ENCODE measurements at regions of chr10 and their contacts with region 1.

Region 1: GRCh38 chr10:13659897-13660550 is 73.3 kb downstream of the PRPF18 start:
- DNase-seq: peak; percentile 49 to 67 (median 60)
- H3K4me3 ChIP-seq: no peak overlapping the region
- H3K4me3 Mint-ChIP-seq: peak overlapping the region in 2 of 8 donors; percentile 44 to 48
- H3K27ac ChIP-seq: no peak overlapping the region
- H3K27ac Mint-ChIP-seq: peak overlapping the region in 4 of 7 donors; percentile 19 to 61 (median 41)
- H3K4me1 ChIP-seq: peaks cover 11% of the 10 kb centered on the region
- H3K4me1 Mint-ChIP-seq: peaks cover 5 to 11% (median 8%) of the 10 kb centered on the region in 4 donors
- H3K27me3 ChIP-seq: no peaks in the 10 kb centered on the region
- H3K27me3 Mint-ChIP-seq: no peaks in the 10 kb centered on the region

Region 2: GRCh38 chr10:13776861-13777311 is 116.9 kb after region 1 on chr10:
- CTCF ChIA-PET with region 1: interaction called, 18 read pairs
- POLR2A ChIA-PET with region 1: no interaction called
- intact Hi-C with region 1: loop called (anchors 1 kb)
- DNase-seq: no peak
- H3K4me3 ChIP-seq: no peak overlapping the region
- H3K4me3 Mint-ChIP-seq: no peak overlapping the region
- H3K27ac ChIP-seq: no peak overlapping the region
- H3K27ac Mint-ChIP-seq: no peak overlapping the region
- H3K4me1 ChIP-seq: no peaks in the 10 kb centered on the region
- H3K4me1 Mint-ChIP-seq: peaks cover 0 to 6% (median 2%) of the 10 kb centered on the region in 4 donors
- H3K27me3 ChIP-seq: no peaks in the 10 kb centered on the region
- H3K27me3 Mint-ChIP-seq: peaks cover 20 to 21% of the 10 kb centered on the region in 2 donors